Tibial artery (tissue), 4 donors: ENCODE measurements at regions of chr1 and their contacts with region 1.

Region 1: GRCh38 chr1:52296345-52296744 is 69.7 kb downstream of the CC2D1B start:
- DNase-seq: no peak
- H3K4me3 ChIP-seq: no peak overlapping the region
- H3K27ac ChIP-seq: no peak overlapping the region
- H3K4me1 ChIP-seq: no peaks in the 10 kb centered on the region
- H3K27me3 ChIP-seq: no peaks in the 10 kb centered on the region
- CTCF ChIP-seq: peak; percentile 61 to 62

Region 2: GRCh38 chr1:52127181-52128180 is 168.9 kb before region 1 on chr1:
- intact Hi-C with region 1: loop called (anchors 10 kb)
- DNase-seq: peak in 1 of 2 donors; percentile 36
- H3K4me3 ChIP-seq: no peak overlapping the region
- H3K27ac ChIP-seq: no peak overlapping the region
- H3K4me1 ChIP-seq: no peaks in the 10 kb centered on the region
- H3K27me3 ChIP-seq: peaks cover 0 to 9% of the 10 kb centered on the region in 2 donors
- CTCF ChIP-seq: peak; percentile 63 to 69

Region 3: DNA sequence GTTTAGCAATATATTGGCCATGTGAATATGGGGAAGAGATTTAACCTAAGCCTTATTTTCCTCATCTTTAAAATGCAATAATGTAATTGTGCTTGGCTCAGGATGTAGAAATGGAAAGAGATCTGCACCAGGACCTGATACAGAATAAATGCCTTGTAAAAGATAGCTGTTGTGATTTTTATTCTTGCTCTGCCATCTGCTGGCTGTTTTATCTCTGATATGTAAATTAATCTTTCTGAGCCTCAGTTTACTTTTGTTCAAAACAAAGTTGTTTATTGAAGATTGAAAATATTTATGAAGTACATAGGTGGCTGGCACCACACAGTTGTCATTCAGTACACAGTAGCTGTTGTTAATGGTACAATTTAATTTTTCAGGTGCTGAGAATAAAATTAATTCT is 451.8 kb after region 1 on chr1:
- intact Hi-C with region 1: no loop called
- DNase-seq: no peak
- H3K4me3 ChIP-seq: no peak overlapping the region
- H3K27ac ChIP-seq: no peak overlapping the region
- H3K4me1 ChIP-seq: peaks cover 0 to 31% (median 14%) of the 10 kb centered on the region in 4 donors
- H3K27me3 ChIP-seq: no peaks in the 10 kb centered on the region
- CTCF ChIP-seq: peak; percentile 11